ENCODE measurements at regions of chr10 and their contacts with region 1.

Region 1: GRCh38 chr10:6050801-6051445 is 11.2 kb downstream of the IL2RA start:
- DNase-seq: peak; percentile 87 to 98
- ATAC-seq: peak; percentile 71 to 88 (median 86)
- H3K4me3 ChIP-seq: peak overlapping the region; percentile 29
- H3K4me3 Mint-ChIP-seq: peak overlapping the region; percentile 96
- H3K27ac ChIP-seq: peak overlapping the region; percentile 74
- H3K27ac Mint-ChIP-seq: peak overlapping the region; percentile 92 to 99
- H3K4me1 ChIP-seq: peaks cover 55% of the 10 kb centered on the region
- H3K4me1 Mint-ChIP-seq: peaks cover 55 to 56% of the 10 kb centered on the region in 2 donors
- H3K27me3 ChIP-seq: no peaks in the 10 kb centered on the region
- H3K27me3 Mint-ChIP-seq: peaks cover 0 to 6% of the 10 kb centered on the region in 2 donors
- CTCF ChIP-seq: no peak

Region 2: DNA sequence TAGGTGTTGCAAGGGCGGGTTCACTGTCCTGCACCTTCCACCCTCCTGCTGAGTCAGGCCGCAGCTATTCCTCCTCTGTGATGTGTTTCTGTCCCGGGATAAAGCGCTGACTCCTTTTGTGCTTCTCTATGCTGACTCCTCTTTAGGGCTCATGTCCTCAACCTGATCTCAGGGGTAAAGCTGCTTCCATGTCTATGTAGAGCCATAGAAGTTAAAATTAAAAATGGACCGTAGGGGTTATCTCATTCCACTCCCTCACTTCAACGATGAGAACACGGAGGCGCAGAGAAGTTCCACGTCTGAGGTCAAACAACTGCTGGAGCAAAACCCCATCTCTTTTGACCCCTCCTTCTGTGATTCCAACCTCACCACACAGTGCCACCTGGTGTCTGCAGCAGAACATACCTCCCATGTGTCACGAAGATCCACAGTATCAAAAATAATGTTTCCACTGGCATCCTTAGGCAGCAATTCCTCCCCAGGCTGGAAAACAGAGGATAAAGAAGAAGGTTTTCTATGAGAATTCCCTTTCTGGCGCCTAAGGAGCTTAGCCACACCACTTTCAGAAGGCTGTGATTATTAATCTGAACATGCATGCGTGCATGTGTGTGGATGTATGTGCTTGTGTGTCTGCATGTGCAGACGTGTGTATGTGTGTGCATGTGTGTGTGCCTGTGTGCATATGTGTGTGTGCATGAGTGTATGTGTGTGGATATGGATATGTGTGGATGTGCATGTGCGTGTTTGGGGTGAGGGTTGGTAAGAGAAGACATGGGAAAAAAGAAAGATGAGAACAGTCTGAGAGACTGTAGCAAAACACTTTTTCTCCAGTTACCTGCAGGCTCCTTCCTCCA is 767.4 kb before region 1 on chr10:
- intact Hi-C with region 1: no loop called
- DNase-seq: peak; percentile 57 to 78
- ATAC-seq: peak; percentile 84 to 93 (median 84)
- H3K4me3 ChIP-seq: no peak overlapping the region
- H3K4me3 Mint-ChIP-seq: peak overlapping the region; percentile 86
- H3K27ac ChIP-seq: peak overlapping the region; percentile 52
- H3K27ac Mint-ChIP-seq: peak overlapping the region; percentile 85 to 92
- H3K4me1 ChIP-seq: peaks cover 16% of the 10 kb centered on the region
- H3K4me1 Mint-ChIP-seq: peaks cover 42 to 45% of the 10 kb centered on the region in 2 donors
- H3K27me3 ChIP-seq: no peaks in the 10 kb centered on the region
- H3K27me3 Mint-ChIP-seq: no peaks in the 10 kb centered on the region
- CTCF ChIP-seq: peak; percentile 76

Region 3: GRCh38 chr10:5977471-5978229 is 73.3 kb before region 1 on chr10 and contains the start of gene IL15RA:
- intact Hi-C with region 1: loop called (anchors 2 kb)
- DNase-seq: peak; percentile 82 to 90
- ATAC-seq: peak; percentile 77 to 88 (median 82)
- H3K4me3 ChIP-seq: peak within 1 kb of the TSS; percentile 97
- H3K4me3 Mint-ChIP-seq: peak within 1 kb of the TSS; percentile 94
- H3K27ac ChIP-seq: peak within 1 kb of the TSS; percentile 89
- H3K27ac Mint-ChIP-seq: peak within 1 kb of the TSS; percentile 84 to 89
- H3K4me1 ChIP-seq: peaks cover 22% of the 10 kb centered on the region
- H3K4me1 Mint-ChIP-seq: peaks cover 23 to 24% of the 10 kb centered on the region in 2 donors
- H3K27me3 ChIP-seq: no peaks in the 10 kb centered on the region
- H3K27me3 Mint-ChIP-seq: no peaks in the 10 kb centered on the region
- CTCF ChIP-seq: no peak
- total RNA-seq, gene IL15RA: 10.7 to 11.8 (median 11.3) TPM

Region 4: DNA sequence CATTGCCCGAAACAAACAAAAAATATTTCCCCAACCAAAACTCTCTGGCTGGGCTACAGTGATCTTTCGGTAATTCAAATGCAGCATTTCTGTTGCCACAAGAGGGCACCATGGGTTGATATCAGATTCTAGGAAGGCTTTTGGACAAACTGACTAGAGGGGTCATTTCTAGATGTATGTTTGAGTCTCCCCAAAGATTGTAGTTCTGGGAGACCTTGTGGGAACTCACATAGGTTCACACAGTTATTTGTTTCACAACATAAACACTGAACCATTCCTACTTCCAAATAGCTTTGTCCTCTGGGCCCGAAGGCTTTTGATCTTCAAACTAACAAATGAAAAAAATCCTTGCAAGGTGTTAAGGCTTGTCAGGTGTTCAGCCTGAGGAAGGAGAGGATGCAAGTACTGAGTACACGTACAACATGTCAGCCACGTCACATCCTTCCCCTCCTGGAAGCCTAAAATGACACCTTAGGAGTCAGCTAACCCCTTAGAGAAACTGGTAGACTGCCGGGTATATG is 36.6 kb before region 1 on chr10:
- intact Hi-C with region 1: loop called (anchors 1 kb)
- DNase-seq: peak; percentile 33 to 87
- ATAC-seq: peak; percentile 70 to 84 (median 82)
- H3K4me3 ChIP-seq: no peak overlapping the region
- H3K4me3 Mint-ChIP-seq: no peak overlapping the region
- H3K27ac ChIP-seq: peak overlapping the region; percentile 59
- H3K27ac Mint-ChIP-seq: peak overlapping the region; percentile 43
- H3K4me1 ChIP-seq: peaks cover 8% of the 10 kb centered on the region
- H3K4me1 Mint-ChIP-seq: peaks cover 0 to 8% of the 10 kb centered on the region in 2 donors
- H3K27me3 ChIP-seq: no peaks in the 10 kb centered on the region
- H3K27me3 Mint-ChIP-seq: peaks cover 0 to 4% of the 10 kb centered on the region in 2 donors
- CTCF ChIP-seq: peak; percentile 77

Region 5: DNA sequence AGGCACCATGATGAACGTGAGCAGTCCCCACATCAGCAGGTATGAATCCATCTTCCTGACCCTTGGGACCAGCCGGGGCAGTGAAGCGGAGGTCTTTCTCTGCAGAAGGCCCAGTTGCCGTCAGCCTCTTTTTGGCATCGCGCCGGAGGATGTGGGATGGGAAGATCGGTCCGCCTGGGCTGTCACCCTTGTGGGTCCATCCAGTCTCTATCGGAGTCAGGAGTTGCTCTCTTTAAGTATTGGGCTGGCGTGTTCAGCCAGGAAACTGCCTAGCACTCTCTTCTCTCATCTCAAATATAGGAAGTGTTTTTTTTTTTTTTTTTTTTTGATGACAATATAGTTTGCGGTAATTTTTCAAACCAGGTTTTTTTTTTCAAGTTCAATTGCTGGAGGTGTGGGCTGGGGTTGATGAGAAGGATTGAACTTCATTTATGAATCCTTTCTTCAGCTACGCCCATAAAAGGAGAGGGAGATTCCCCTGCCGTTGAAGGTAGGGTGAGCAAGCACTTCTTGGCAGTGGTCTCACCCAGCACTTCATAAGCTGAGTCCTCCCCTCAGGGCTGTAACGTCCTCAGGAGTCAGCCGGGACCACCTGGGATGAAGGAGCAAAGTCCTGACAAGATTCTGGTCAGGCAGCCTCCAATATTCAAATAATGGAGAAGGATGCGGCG is 11.3 kb after region 1 on chr10 and contains the start of gene IL2RA:
- intact Hi-C with region 1: loop called (anchors 1 kb)
- DNase-seq: peak; percentile 35 to 86
- ATAC-seq: peak; percentile 70 to 88 (median 83)
- H3K4me3 ChIP-seq: peak within 1 kb of the TSS; percentile 39
- H3K4me3 Mint-ChIP-seq: peak within 1 kb of the TSS; percentile 81
- H3K27ac ChIP-seq: peak within 1 kb of the TSS; percentile 16
- H3K27ac Mint-ChIP-seq: peak within 1 kb of the TSS; percentile 74 to 77
- H3K4me1 ChIP-seq: peaks cover 41% of the 10 kb centered on the region
- H3K4me1 Mint-ChIP-seq: peaks cover 34 to 45% of the 10 kb centered on the region in 2 donors
- H3K27me3 ChIP-seq: no peaks in the 10 kb centered on the region
- H3K27me3 Mint-ChIP-seq: peaks cover 1 to 5% of the 10 kb centered on the region in 2 donors
- CTCF ChIP-seq: no peak
- total RNA-seq, gene IL2RA: 3.4 to 11.2 (median 3.7) TPM